ENCODE measurements at regions of chr20 and their contacts with region 1.

Region 1: GRCh38 chr20:5448449-5449118 is 131.8 kb upstream of the PROKR2 start:
- DNase-seq: peak; percentile 64 to 76
- H3K4me3 ChIP-seq: no peak overlapping the region
- H3K4me3 Mint-ChIP-seq: no peak overlapping the region
- H3K27ac Mint-ChIP-seq: no peak overlapping the region
- H3K4me1 ChIP-seq: no peaks in the 10 kb centered on the region
- H3K4me1 Mint-ChIP-seq: peaks cover under 1% of the 10 kb centered on the region
- H3K27me3 ChIP-seq: 0 out of 2 replicates have a peak, but pooled peaks cover 1% of the 10 kb centered on the region
- H3K27me3 Mint-ChIP-seq: peaks cover 7% of the 10 kb centered on the region
- CTCF ChIP-seq: peak; percentile 61 to 74

Region 2: GRCh38 chr20:3632311-3633004 is 1816.1 kb before region 1 on chr20:
- CTCF ChIA-PET with region 1: no interaction called
- POLR2A ChIA-PET with region 1: no interaction called
- intact Hi-C with region 1: no loop called
- DNase-seq: no peak
- H3K4me3 ChIP-seq: no peak overlapping the region
- H3K4me3 Mint-ChIP-seq: no peak overlapping the region
- H3K27ac Mint-ChIP-seq: no peak overlapping the region
- H3K4me1 ChIP-seq: no peaks in the 10 kb centered on the region
- H3K4me1 Mint-ChIP-seq: peaks cover 7% of the 10 kb centered on the region
- H3K27me3 ChIP-seq: no peaks in the 10 kb centered on the region
- H3K27me3 Mint-ChIP-seq: no peaks in the 10 kb centered on the region
- CTCF ChIP-seq: peak in 1 of 2 experiments; percentile 20

Region 3: GRCh38 chr20:5181956-5182355 is 266.6 kb before region 1 on chr20:
- CTCF ChIA-PET with region 1: no interaction called
- POLR2A ChIA-PET with region 1: no interaction called
- intact Hi-C with region 1: no loop called
- DNase-seq: no peak
- H3K4me3 ChIP-seq: no peak overlapping the region
- H3K4me3 Mint-ChIP-seq: no peak overlapping the region
- H3K27ac Mint-ChIP-seq: no peak overlapping the region
- H3K4me1 ChIP-seq: no peaks in the 10 kb centered on the region
- H3K4me1 Mint-ChIP-seq: no peaks in the 10 kb centered on the region
- H3K27me3 ChIP-seq: no peaks in the 10 kb centered on the region
- H3K27me3 Mint-ChIP-seq: no peaks in the 10 kb centered on the region
- CTCF ChIP-seq: no peak

Region 4: DNA sequence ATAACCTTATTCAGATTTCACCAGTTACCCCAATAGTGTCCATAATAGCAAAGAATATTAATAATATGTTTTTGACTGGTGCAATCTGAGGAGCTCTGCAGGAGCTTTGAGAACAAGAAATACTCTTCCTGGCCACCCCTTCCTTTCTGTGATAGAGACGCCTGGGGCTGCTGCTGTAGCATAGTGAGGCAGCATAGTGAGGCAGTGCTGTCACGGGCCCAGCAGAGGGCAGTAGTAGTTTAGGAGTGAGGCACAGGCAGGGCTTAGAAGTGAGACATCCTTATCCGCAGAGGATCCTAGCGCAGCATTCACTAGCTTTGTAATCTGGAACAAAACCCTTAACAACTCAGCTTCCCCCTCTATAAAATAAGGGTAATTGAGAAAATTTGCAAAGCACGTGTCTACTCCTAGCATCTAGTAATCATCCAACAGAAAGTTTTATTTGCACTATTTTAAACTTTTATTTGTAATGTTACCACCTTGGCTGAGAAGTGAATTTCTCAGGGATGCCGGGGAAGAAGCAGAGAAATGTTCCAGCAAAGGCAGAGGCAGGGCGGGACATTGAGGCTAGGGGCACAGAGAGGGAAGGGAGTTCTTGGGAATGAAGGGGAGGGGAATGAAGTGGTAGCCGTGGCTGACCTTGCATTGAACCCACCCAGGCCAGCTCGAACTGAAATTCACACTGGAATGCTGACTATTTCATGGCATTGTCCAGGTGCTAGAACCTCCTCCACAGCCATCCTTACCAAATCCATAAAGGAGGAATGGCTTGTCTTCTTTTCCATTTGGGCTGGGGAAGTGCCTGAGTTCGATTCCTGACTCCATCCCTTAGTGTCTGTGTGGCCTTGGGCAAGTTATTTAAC is 243.0 kb before region 1 on chr20:
- CTCF ChIA-PET with region 1: interaction called, 25 read pairs
- POLR2A ChIA-PET with region 1: no interaction called
- intact Hi-C with region 1: loop called (anchors 1 kb)
- DNase-seq: peak; percentile 84 to 86
- H3K4me3 ChIP-seq: no peak overlapping the region
- H3K4me3 Mint-ChIP-seq: no peak overlapping the region
- H3K27ac Mint-ChIP-seq: no peak overlapping the region
- H3K4me1 ChIP-seq: no peaks in the 10 kb centered on the region
- H3K4me1 Mint-ChIP-seq: no peaks in the 10 kb centered on the region
- H3K27me3 ChIP-seq: no peaks in the 10 kb centered on the region
- H3K27me3 Mint-ChIP-seq: no peaks in the 10 kb centered on the region
- CTCF ChIP-seq: peak; percentile 92 to 95

Region 5: GRCh38 chr20:5402903-5403531 is 45.6 kb before region 1 on chr20:
- CTCF ChIA-PET with region 1: interaction called, 12 read pairs
- POLR2A ChIA-PET with region 1: no interaction called
- intact Hi-C with region 1: loop called (anchors 2 kb)
- DNase-seq: peak; percentile 54 to 67
- H3K4me3 ChIP-seq: no peak overlapping the region
- H3K4me3 Mint-ChIP-seq: no peak overlapping the region
- H3K27ac Mint-ChIP-seq: no peak overlapping the region
- H3K4me1 ChIP-seq: no peaks in the 10 kb centered on the region
- H3K4me1 Mint-ChIP-seq: no peaks in the 10 kb centered on the region
- H3K27me3 ChIP-seq: no peaks in the 10 kb centered on the region; the same call in 1 of the 2 replicates
- H3K27me3 Mint-ChIP-seq: peaks cover 4% of the 10 kb centered on the region
- CTCF ChIP-seq: peak; percentile 66 to 80